GM10248 (cell line): ENCODE measurements at regions of chr19 and their contacts with region 1.

Region 1: GRCh38 chr19:33406521-33407139 is 33.1 kb downstream of the CEBPG start:
- DNase-seq: peak; percentile 89
- CTCF ChIP-seq: peak; percentile 88

Region 2: DNA sequence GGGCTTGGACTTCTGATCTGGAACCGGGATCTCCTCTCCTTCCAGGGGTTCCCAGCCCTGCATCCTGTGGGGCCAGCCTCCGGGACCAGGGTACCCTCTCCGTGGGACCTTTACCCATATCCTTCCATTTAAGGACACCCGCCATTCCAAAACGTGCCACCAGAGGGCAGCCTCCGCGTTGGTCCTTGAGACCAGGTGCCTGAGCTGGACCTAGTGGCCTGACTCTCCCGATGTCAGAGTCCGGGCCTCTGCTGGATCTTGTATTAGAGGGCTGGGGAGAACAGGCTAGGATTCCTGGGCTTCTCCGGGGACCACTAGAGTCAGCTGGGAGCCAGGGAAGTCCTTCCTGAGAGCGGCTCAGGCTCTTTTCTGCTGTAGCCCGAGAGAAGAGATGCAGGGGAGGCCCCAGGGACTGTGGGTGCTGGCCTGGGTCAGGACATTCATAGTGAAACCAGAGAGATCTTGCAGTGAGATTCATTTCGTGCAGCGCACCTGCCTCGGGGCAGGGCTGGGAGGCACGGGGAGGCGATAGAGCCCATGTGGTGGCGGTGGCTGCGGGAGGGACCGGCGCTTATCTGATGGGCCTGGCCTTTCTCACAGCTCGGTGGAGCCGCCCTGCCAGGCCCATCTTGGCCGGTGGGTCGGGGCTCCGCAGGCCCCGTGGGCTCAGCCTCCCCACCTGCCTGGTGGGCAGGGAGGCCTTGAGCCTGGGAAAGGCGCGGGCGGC is 171.2 kb before region 1 on chr19:
- CTCF ChIA-PET with region 1: interaction called, 93 read pairs
- POLR2A ChIA-PET with region 1: no interaction called
- DNase-seq: peak; percentile 91
- CTCF ChIP-seq: peak; percentile 82

Region 3: GRCh38 chr19:33241530-33242101 is 165.0 kb before region 1 on chr19:
- CTCF ChIA-PET with region 1: interaction called, 93 read pairs
- POLR2A ChIA-PET with region 1: no interaction called
- DNase-seq: no peak
- CTCF ChIP-seq: peak; percentile 46

Region 4: GRCh38 chr19:33385956-33386355 is 20.7 kb before region 1 on chr19:
- CTCF ChIA-PET with region 1: interaction called, 13 read pairs
- POLR2A ChIA-PET with region 1: no interaction called
- DNase-seq: no peak
- CTCF ChIP-seq: no peak

Region 5: DNA sequence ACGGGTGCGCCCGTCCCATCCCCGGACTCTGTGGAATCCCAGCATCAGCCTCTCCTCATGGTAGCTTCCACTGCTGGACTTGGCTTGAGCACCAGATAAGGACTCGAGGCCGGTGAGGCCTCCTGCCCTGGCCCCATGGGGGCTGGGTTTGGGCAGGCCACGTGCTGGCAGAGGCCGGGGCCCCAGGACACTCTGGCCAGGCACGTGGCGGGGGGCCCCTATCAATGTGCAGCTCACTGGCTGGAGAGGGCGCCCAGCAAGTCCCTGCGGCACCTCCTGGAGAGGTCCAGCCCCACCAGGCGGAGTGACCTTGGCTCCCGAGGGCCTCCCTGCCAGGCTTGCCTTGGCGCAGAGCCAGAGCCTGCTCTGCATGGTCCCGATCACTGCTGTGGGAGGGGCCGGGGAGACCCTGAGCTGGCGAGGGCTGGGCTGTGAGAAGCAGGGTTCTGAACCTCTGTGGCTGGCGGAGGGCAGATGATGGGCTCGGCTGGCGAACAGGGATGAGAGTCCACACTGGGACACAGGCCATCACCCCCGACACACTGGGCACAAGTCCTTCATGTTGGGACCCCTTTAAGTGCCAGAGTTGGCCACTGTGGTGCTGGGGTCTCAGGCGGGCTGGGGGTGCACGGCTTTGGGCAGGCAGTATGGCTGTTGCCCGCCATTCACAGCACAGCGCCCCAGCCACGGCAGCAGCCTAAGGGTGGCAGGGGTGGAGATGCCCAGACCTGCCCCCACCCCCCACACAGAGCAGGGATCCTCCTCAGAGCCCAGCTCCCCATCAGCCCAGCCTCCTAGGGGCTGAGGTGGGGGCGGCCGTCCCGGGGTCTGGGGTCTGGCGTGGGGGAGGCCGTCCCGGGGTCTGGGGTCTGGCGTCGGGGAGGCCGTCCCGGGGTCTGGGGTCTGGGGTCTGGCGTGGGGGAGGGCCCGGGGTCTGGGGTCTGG is 14.0 kb before region 1 on chr19:
- CTCF ChIA-PET with region 1: interaction called, 22 read pairs
- POLR2A ChIA-PET with region 1: no interaction called
- DNase-seq: peak; percentile 14
- CTCF ChIP-seq: no peak

Region 6: GRCh38 chr19:33430674-33431277 is 24.1 kb after region 1 on chr19:
- CTCF ChIA-PET with region 1: interaction called, 18 read pairs
- POLR2A ChIA-PET with region 1: no interaction called
- DNase-seq: peak; percentile 75
- CTCF ChIP-seq: peak; percentile 93